ENCODE measurements at regions of chr12 and their contacts with region 1.

Region 1: DNA sequence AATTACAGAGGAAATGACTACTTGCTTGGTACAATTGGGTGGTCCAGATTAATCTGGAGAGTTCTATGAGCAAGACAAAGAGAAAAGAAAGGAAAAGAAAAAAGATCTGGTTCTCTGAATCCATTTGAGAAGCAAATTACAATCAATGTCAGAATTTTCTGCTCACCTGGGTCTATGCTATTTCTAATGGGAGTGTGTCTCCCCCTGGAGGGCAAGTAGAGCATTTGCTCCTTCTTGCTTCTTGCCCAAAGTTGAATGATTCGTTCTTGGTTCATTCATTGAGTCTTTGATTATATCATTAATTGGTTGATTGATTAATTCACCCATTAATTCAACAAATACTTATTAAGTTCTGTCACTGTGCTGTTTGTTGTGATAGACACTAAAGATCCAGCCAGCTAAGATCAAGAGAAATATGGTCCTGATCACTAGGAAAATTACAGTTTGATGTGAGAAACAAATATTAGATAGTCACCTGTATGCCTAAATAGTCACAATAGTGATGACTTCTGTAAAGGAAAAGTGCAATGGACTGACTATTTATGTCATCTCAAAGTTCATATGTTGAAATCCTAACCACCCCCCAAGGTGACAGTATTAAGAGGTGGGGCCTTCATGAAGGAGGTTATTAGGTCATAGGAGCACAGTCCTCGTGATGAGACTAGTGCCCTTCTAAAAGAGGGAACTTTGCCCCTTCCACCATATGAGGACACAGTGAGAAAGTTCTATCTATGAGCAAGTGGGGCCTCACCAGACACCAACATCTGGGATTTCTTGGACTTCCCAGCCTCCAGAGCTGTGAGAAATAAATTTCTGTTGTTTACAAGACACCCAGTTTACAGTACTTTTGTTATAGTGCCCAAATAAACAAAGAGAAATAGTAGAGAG is 8.0 kb upstream of the ASB8 start:
- DNase-seq: no peak
- ATAC-seq: peak; percentile 29 to 34
- H3K4me3 ChIP-seq: no peak overlapping the region
- H3K27ac ChIP-seq: peak overlapping the region; percentile 86 to 98 (median 90)
- H3K4me1 ChIP-seq: peaks cover 26 to 44% of the 10 kb centered on the region in 2 donors
- H3K27me3 ChIP-seq: no peaks in the 10 kb centered on the region
- CTCF ChIP-seq: peak; percentile 88 to 94 (median 89)
- POLR2A ChIP-seq: no peak

Region 2: GRCh38 chr12:47812797-47813510 is 352.4 kb before region 1 on chr12:
- in situ Hi-C with region 1: no loop called
- intact Hi-C with region 1: loop called (anchors 10 kb)
- DNase-seq: peak; percentile 77 to 87
- ATAC-seq: peak; percentile 65 to 77
- H3K4me3 ChIP-seq: peak overlapping the region; percentile 48 to 57 (median 56)
- H3K27ac ChIP-seq: peak overlapping the region; percentile 85 to 94 (median 92)
- H3K4me1 ChIP-seq: peaks cover 85 to 95% of the 10 kb centered on the region in 2 donors
- H3K27me3 ChIP-seq: no peaks in the 10 kb centered on the region
- CTCF ChIP-seq: no peak
- POLR2A ChIP-seq: peak; percentile 55 to 62

Region 3: DNA sequence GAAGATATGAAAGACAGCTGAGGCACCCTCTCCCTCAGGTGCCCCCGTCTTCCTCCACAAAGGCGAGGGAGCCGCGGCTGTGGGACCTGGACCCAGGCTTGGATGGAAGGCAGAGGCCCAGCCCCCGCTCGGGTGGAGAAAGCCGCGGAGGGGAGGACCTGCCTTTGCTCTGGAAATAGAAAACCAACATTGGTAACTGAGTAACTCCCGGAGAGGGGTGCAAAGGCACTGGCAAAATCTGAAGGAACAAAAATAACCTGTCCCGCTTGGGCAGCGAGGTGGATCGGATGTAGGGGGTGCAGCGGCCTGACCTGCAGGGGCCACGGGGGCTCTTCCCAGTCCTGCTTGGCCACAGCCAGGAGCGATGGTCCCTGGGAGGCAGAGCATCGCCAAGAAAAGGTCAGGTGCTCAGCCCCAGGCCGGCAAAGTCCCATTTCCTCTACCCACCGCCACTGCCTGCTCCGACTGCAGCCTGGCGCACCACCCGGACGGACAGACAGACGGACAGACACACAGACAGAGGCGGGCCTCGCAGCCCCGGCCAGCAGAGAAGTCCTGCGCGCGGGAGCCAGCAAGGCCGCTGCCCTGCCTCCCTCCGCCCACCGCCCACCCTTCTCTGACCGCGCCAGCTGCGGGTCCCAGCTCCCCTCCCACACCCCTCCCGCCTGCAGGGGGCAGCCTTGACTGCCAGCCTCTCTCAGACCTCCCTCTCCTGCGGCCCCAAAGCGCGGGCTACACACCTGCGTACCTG is 223.3 kb before region 1 on chr12:
- in situ Hi-C with region 1: no loop called
- intact Hi-C with region 1: loop called (anchors 1 kb)
- DNase-seq: no peak
- ATAC-seq: no peak
- H3K4me3 ChIP-seq: no peak overlapping the region
- H3K27ac ChIP-seq: no peak overlapping the region
- H3K4me1 ChIP-seq: peaks cover 0 to 5% of the 10 kb centered on the region in 2 donors
- H3K27me3 ChIP-seq: peaks cover 3 to 5% (median 5%) of the 10 kb centered on the region in 3 donors
- CTCF ChIP-seq: peak in 3 of 5 experiments; percentile 17 to 39 (median 17)
- POLR2A ChIP-seq: no peak

Region 4: GRCh38 chr12:47963340-47964040 is 201.8 kb before region 1 on chr12 and contains the start of gene TMEM106C:
- in situ Hi-C with region 1: no loop called
- intact Hi-C with region 1: loop called (anchors 2 kb)
- DNase-seq: peak; percentile 72 to 87
- ATAC-seq: peak; percentile 88 to 91
- H3K4me3 ChIP-seq: peak within 1 kb of the TSS; percentile 83 to 97 (median 95)
- H3K27ac ChIP-seq: peak within 1 kb of the TSS; percentile 67 to 77 (median 70)
- H3K4me1 ChIP-seq: peaks cover 11 to 14% of the 10 kb centered on the region in 2 donors
- H3K27me3 ChIP-seq: no peaks in the 10 kb centered on the region
- CTCF ChIP-seq: peak; percentile 88 to 99 (median 96)
- POLR2A ChIP-seq: peak in 1 of 2 donors; percentile 7
- total RNA-seq, gene TMEM106C: 11.8 to 27.1 (median 24.8) TPM

Region 5: DNA sequence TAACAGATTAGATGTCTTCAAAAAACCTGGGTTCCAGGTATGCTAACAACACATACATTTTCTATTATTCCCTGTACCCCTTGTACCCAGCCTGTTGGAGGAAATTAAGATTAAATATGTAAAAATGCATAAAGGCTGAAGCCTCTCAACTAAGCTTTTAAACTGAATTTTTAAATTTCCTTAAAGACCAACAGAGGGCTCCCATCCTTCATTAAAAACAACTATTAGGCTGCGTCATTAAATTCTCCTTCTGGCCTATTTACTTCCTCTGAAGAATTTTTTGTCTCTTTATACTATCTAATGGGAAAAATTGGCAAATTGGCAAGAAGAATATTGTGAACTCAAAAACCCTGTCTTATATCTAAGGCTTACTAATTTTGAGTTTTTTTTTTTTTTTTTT is 81.3 kb before region 1 on chr12:
- in situ Hi-C with region 1: loop called in 3 of 4 experiments (anchors 5 to 10 kb)
- intact Hi-C with region 1: loop called (anchors 1 kb)
- DNase-seq: no peak
- ATAC-seq: peak; percentile 39 to 56
- H3K4me3 ChIP-seq: no peak overlapping the region
- H3K27ac ChIP-seq: no peak overlapping the region
- H3K4me1 ChIP-seq: no peaks in the 10 kb centered on the region
- H3K27me3 ChIP-seq: no peaks in the 10 kb centered on the region
- CTCF ChIP-seq: peak; percentile 29 to 65 (median 42)
- POLR2A ChIP-seq: no peak

Region 6: GRCh38 chr12:48105862-48106680 is 59.3 kb before region 1 on chr12 and contains the start of gene SENP1:
- in situ Hi-C with region 1: loop called in 1 of 4 experiments (anchors 5 kb)
- intact Hi-C with region 1: loop called (anchors 1 kb)
- DNase-seq: peak; percentile 81 to 87
- ATAC-seq: peak; percentile 94 to 97
- H3K4me3 ChIP-seq: peak within 1 kb of the TSS; percentile 77 to 92 (median 89)
- H3K27ac ChIP-seq: peak within 1 kb of the TSS; percentile 87 to 96 (median 90)
- H3K4me1 ChIP-seq: peaks cover 20 to 27% of the 10 kb centered on the region in 2 donors
- H3K27me3 ChIP-seq: no peaks in the 10 kb centered on the region
- CTCF ChIP-seq: peak in 4 of 5 experiments; percentile 6 to 51 (median 42)
- POLR2A ChIP-seq: peak; percentile 38 to 46
- total RNA-seq, gene SENP1: 8.7 to 19.1 (median 13.1) TPM

Region 7: GRCh38 chr12:48183091-48183875 is 17.9 kb after region 1 on chr12 and contains the start of gene CCDC184:
- in situ Hi-C with region 1: no loop called
- intact Hi-C with region 1: no loop called
- DNase-seq: peak in 1 of 2 donors; percentile 26
- ATAC-seq: peak; percentile 40 to 55
- H3K4me3 ChIP-seq: peak within 1 kb of the TSS; percentile 58 to 62 (median 60)
- H3K27ac ChIP-seq: peak within 1 kb of the TSS; percentile 17 to 56 (median 38)
- H3K4me1 ChIP-seq: peaks cover 13 to 18% of the 10 kb centered on the region in 2 donors
- H3K27me3 ChIP-seq: peaks cover 44 to 64% (median 57%) of the 10 kb centered on the region in 3 donors
- CTCF ChIP-seq: no peak
- POLR2A ChIP-seq: peak in 1 of 2 donors; percentile 20
- total RNA-seq, gene CCDC184: 0.38 to 2.0 (median 1.1) TPM

Region 8: DNA sequence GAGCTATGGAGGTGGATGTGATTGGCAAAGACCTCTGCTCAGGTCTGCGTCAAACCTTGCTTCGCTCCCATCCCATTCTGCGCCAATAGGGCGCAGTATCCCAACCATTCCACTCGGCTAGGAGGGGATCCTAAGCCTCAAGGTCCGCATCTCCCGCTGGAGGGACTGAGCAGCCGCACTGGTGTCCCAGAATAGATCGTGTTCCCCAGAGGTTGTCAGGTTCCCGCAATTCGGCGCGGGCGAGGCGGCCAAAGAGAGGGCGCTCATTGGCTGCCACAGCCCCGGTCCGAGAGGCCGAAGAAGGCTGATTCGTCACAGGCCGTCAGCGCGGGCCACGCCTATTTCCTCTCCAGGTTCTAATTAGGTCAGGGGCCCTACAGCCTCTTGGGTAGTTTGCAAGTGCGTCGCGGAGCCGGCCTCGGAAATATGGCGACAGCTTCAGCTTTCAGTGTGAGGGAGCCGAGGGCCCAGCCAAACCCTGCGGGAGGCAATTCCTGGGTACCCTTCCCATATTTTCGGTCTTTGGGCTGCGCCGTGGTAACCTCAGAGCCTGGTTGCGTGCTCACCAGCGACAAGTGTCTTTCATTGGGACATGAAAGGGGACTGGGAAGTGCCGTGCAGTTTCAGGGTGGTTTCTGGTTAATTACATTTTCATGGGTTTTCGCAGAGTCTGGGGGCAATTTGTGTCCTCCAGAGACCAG is 32.8 kb after region 1 on chr12:
- in situ Hi-C with region 1: no loop called
- intact Hi-C with region 1: loop called (anchors 1 kb)
- DNase-seq: peak; percentile 98 to 99
- ATAC-seq: peak; percentile 92 to 96
- H3K4me3 ChIP-seq: peak overlapping the region; percentile 88 to 94 (median 92)
- H3K27ac ChIP-seq: peak overlapping the region; percentile 97 to 100 (median 99)
- H3K4me1 ChIP-seq: peaks cover 20% of the 10 kb centered on the region in 2 donors
- H3K27me3 ChIP-seq: no peaks in the 10 kb centered on the region
- CTCF ChIP-seq: no peak
- POLR2A ChIP-seq: peak; percentile 97 to 98